Pancreas (tissue), 10 donors: ENCODE measurements at regions of chr9 and their contacts with region 1.

Region 1: DNA sequence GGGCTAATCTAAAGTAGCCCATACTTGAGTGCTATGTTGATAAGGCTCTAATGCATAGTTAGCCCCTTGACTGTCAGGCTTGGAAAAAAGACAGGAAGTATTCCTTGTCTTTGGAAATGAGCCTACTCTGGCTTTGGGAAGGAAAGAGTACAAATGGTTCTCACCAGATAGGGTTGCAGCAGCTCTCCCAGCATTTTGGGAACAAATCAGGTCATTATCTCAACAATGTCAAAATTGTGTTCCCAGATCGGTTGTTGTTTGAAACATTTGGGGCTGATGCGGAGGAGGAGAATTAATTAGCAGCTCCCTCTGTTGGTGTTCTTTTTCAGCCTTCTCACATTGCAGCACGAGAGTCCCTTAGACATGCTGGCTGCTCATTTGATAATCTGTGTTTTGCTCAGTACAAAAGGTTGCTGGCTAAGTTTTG is 294.7 kb upstream of the DMRT1 start:
- DNase-seq: no peak
- ATAC-seq: peak; percentile 61 to 84 (median 80)
- H3K4me3 ChIP-seq: peak overlapping the region in 1 of 4 donors; percentile 18
- H3K27ac ChIP-seq: peak overlapping the region in 1 of 4 donors; percentile 4
- H3K4me1 ChIP-seq: peaks cover 0 to 14% (median 11%) of the 10 kb centered on the region in 3 donors
- H3K27me3 ChIP-seq: no peaks in the 10 kb centered on the region
- CTCF ChIP-seq: peak in 1 of 4 donors; percentile 8

Region 2: DNA sequence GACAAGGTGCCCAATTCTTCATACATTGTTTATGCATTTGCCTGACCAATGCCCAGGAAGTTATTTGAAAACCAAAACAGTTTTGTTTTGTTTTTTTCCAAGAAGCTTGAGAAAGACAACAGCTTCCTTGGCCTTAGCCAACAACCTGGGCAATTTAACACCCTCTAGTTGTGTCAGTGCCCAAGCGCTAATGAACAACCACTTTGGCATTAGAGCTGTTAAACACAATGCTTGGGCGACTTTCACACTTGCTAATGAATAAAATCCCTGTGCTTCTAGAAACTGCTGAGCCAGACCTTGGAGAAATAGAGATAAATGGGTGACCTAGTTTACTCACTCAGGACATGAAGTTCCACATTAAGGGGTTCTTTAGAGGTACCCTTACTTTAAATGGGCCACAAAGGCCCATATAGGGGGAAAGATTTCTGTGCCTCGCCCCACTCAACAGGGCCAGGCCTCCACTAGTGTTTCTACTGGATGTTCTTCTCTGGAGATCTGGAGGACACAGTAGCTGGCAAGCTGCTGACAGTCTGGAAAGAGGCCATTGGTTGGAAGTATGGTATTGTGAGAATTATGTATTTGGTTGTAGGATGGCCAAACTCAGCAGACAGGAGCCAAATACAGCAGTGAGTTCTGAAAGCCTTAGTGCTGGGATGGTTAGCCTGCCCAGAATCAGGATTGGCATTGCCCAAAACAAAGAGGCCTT is 152.3 kb before region 1 on chr9:
- intact Hi-C with region 1: loop called in 1 of 3 experiments (anchors 10 kb)
- DNase-seq: no peak
- ATAC-seq: no peak
- H3K4me3 ChIP-seq: no peak overlapping the region
- H3K27ac ChIP-seq: no peak overlapping the region
- H3K4me1 ChIP-seq: no peaks in the 10 kb centered on the region
- H3K27me3 ChIP-seq: no peaks in the 10 kb centered on the region
- CTCF ChIP-seq: no peak